A673 (cell line): ENCODE measurements at regions of chr9 and their contacts with region 1.

Region 1: GRCh38 chr9:105425841-105426436 is 21.9 kb upstream of the FSD1L start:
- DNase-seq: peak; percentile 39
- H3K4me3 ChIP-seq: no peak overlapping the region
- H3K27ac ChIP-seq: no peak overlapping the region
- H3K4me1 ChIP-seq: no peaks in the 10 kb centered on the region
- H3K27me3 ChIP-seq: no peaks in the 10 kb centered on the region
- CTCF ChIP-seq: peak; percentile 64

Region 2: GRCh38 chr9:104895572-104895971 is 530.4 kb before region 1 on chr9:
- CTCF ChIA-PET with region 1: interaction called, 16 read pairs
- POLR2A ChIA-PET with region 1: no interaction called
- intact Hi-C with region 1: no loop called
- DNase-seq: no peak
- H3K4me3 ChIP-seq: no peak overlapping the region
- H3K27ac ChIP-seq: no peak overlapping the region
- H3K4me1 ChIP-seq: no peaks in the 10 kb centered on the region
- H3K27me3 ChIP-seq: no peaks in the 10 kb centered on the region
- CTCF ChIP-seq: no peak

Region 3: GRCh38 chr9:105541838-105542237 is 115.9 kb after region 1 on chr9:
- CTCF ChIA-PET with region 1: no interaction called
- POLR2A ChIA-PET with region 1: no interaction called
- intact Hi-C with region 1: loop called (anchors 10 kb)
- DNase-seq: no peak
- H3K4me3 ChIP-seq: no peak overlapping the region
- H3K27ac ChIP-seq: no peak overlapping the region
- H3K4me1 ChIP-seq: no peaks in the 10 kb centered on the region
- H3K27me3 ChIP-seq: no peaks in the 10 kb centered on the region
- CTCF ChIP-seq: no peak

Region 4: DNA sequence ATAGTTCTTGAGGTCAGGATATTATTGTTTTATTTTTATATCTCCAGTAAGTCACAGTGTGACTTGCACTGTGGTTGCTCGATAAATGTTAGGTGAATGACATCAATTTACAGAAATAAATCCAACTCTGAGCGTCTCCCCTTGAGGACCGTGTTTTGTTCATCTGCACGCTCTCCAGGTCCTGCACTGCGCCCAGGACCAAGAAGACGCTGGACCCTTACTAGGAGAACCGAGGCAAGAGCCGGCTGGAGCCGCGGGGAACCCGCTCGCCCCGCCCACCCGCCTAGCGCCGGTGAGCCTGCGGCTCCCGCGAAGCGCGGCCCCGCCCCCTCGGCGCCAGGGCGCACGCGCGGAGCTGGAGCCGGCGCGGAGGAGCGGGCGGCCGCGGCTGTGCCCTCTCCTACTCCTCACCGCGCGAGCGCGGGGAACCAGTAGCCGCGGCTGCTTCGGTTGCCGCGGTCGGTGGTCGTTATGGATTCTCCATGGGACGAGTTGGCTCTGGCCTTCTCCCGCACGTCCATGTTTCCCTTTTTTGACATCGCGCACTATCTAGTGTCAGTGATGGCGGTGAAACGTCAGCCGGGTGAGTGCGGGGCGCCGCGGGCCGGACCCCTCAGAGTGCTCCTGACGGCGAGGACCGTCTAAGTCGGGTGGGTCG is 268.4 kb after region 1 on chr9 and contains the start of gene TMEM38B:
- CTCF ChIA-PET with region 1: no interaction called
- POLR2A ChIA-PET with region 1: no interaction called
- intact Hi-C with region 1: loop called (anchors 10 kb)
- DNase-seq: peak; percentile 86
- H3K4me3 ChIP-seq: peak within 1 kb of the TSS; percentile 61
- H3K27ac ChIP-seq: no peak within 1 kb of the TSS
- H3K4me1 ChIP-seq: peaks cover 4% of the 10 kb centered on the region
- H3K27me3 ChIP-seq: peaks cover 28% of the 10 kb centered on the region
- CTCF ChIP-seq: no peak
- total RNA-seq, gene TMEM38B: 16.8 and 22.6 TPM in 2 replicates

Region 5: DNA sequence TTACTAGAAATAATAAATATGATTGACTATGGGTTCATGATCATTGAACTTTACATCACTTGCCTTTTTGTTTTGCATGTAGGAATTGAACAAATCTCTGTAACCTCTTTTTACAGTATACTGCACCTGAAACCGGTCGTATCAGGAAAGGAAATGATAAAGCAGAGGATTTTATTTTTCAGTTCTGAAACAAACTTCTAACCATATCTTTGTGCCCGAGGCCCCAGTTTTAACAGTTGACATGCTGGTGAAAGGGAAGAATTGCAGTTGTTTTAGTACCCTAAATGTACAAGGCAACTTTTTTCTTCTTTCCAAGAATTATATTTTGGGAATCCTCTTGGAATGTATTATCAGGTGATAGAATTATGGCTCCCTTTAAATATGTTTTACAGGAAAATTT is 296.2 kb after region 1 on chr9:
- CTCF ChIA-PET with region 1: interaction called, 4 read pairs
- POLR2A ChIA-PET with region 1: no interaction called
- intact Hi-C with region 1: loop called (anchors 5 kb)
- DNase-seq: no peak
- H3K4me3 ChIP-seq: no peak overlapping the region
- H3K27ac ChIP-seq: no peak overlapping the region
- H3K4me1 ChIP-seq: no peaks in the 10 kb centered on the region
- H3K27me3 ChIP-seq: no peaks in the 10 kb centered on the region
- CTCF ChIP-seq: no peak